ENCODE measurements at regions of chr4 and their contacts with region 1.

Region 1: DNA sequence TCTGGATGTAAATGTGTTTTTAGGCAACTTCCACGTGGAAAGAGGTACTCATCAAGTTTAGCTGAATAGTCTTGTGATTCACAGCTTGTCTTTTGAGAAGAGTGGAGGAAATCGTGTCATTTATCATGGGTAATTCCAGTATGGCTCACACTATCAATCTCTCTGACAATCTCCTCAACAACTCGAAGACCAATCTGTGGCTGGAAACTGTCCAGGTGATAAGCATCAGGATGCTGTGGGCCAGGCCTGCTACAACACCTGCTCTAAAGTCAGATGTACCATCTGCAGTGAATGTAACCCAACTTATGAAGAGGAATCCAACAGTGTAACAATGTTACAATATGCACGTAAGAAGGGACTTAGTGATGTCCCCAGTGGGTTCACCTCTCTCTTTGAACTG is 132.1 kb upstream of the GK2 start:
- DNase-seq: no peak
- ATAC-seq: no peak
- H3K4me3 ChIP-seq: no peak overlapping the region
- H3K27ac ChIP-seq: no peak overlapping the region
- H3K4me1 ChIP-seq: no peaks in the 10 kb centered on the region
- H3K27me3 ChIP-seq: no peaks in the 10 kb centered on the region
- CTCF ChIP-seq: no peak
- POLR2A ChIP-seq: no peak

Region 2: DNA sequence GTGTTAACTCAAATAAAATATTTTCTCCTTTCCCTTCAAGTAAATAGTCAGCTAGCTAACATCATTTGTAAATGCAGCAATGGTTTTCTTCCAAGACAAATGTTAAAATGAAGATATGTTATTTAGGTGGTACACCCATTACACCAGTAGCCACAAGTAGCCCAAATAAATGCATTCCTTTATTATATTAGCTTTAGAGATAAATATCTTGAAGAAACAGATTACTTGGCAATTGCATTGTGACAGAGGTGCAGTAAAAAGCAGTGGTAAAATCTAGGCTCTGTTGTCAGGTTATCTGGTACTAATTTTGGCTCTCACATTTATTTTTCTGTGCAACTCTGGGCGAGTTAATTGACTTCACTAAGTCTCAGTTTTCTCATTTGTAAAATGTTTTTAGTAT is 407.3 kb before region 1 on chr4:
- intact Hi-C with region 1: no loop called
- DNase-seq: no peak
- ATAC-seq: no peak
- H3K4me3 ChIP-seq: no peak overlapping the region
- H3K27ac ChIP-seq: no peak overlapping the region
- H3K4me1 ChIP-seq: no peaks in the 10 kb centered on the region
- H3K27me3 ChIP-seq: no peaks in the 10 kb centered on the region
- CTCF ChIP-seq: no peak
- POLR2A ChIP-seq: no peak

Region 3: GRCh38 chr4:79385641-79386040 is 154.5 kb before region 1 on chr4:
- intact Hi-C with region 1: no loop called
- DNase-seq: no peak
- ATAC-seq: no peak
- H3K4me3 ChIP-seq: no peak overlapping the region
- H3K27ac ChIP-seq: no peak overlapping the region
- H3K4me1 ChIP-seq: no peaks in the 10 kb centered on the region
- H3K27me3 ChIP-seq: no peaks in the 10 kb centered on the region
- CTCF ChIP-seq: no peak
- POLR2A ChIP-seq: no peak

Region 4: GRCh38 chr4:79528241-79528706 is 11.9 kb before region 1 on chr4:
- intact Hi-C with region 1: loop called in 1 of 10 experiments (anchors 1 kb)
- DNase-seq: no peak
- ATAC-seq: no peak
- H3K4me3 ChIP-seq: no peak overlapping the region
- H3K27ac ChIP-seq: no peak overlapping the region
- H3K4me1 ChIP-seq: peaks cover 0 to 7% (median 0%) of the 10 kb centered on the region in 12 donors
- H3K27me3 ChIP-seq: no peaks in the 10 kb centered on the region
- CTCF ChIP-seq: no peak
- POLR2A ChIP-seq: no peak